PC-9 (cell line): ENCODE measurements at regions of chr12 and their contacts with region 1.

Region 1: DNA sequence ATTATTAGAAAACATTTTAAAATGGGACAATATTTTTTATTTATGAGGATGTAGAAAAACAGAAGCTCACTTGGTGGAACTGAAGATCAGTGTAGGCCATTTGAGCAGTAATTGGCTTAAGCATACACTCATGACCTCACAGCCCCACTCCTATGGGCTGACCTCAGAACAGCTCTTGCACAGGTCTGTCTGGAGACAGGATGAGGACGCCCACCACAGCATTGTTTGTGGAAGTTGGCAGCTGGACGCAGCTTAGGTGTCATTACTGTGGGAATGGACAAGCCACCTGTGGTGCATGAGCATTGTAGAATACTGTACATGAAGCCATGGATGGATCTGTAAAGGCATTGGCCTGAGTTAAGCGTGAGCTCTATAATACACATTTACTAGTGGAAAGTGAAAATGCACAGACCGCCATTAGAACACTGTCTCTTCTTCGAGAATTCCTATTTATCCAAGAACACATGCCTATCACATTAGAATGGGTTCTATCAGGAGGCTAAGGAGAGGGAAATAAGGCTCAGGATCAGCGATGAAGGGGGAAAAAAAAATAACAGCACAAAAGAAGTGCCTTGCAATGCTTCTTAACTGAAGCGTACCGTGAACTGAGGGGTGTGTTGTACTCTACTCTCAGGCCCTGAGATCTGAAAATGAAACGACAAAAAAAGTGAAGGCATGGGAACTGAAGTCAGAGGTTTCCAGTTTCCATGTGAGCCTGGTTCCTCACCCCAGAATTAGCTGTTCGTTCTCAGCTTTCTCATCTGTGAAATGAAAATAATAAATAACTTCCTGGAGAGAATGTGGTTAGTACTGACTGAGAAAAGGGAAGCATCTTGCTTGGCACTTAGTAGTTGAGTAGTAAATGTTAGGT is 33.6 kb downstream of the KCNA1 start:
- DNase-seq: no peak
- H3K4me3 ChIP-seq: no peak overlapping the region
- H3K27ac ChIP-seq: no peak overlapping the region
- H3K4me1 ChIP-seq: no peaks in the 10 kb centered on the region
- H3K27me3 ChIP-seq: peaks cover 90% of the 10 kb centered on the region
- CTCF ChIP-seq: no peak

Region 2: GRCh38 chr12:4908684-4909409 is 34.5 kb before region 1 on chr12:
- CTCF ChIA-PET with region 1: no interaction called
- POLR2A ChIA-PET with region 1: no interaction called
- intact Hi-C with region 1: no loop called
- DNase-seq: no peak
- H3K4me3 ChIP-seq: no peak overlapping the region
- H3K27ac ChIP-seq: no peak overlapping the region
- H3K4me1 ChIP-seq: no peaks in the 10 kb centered on the region
- H3K27me3 ChIP-seq: peaks cover 40% of the 10 kb centered on the region
- CTCF ChIP-seq: no peak

Region 3: DNA sequence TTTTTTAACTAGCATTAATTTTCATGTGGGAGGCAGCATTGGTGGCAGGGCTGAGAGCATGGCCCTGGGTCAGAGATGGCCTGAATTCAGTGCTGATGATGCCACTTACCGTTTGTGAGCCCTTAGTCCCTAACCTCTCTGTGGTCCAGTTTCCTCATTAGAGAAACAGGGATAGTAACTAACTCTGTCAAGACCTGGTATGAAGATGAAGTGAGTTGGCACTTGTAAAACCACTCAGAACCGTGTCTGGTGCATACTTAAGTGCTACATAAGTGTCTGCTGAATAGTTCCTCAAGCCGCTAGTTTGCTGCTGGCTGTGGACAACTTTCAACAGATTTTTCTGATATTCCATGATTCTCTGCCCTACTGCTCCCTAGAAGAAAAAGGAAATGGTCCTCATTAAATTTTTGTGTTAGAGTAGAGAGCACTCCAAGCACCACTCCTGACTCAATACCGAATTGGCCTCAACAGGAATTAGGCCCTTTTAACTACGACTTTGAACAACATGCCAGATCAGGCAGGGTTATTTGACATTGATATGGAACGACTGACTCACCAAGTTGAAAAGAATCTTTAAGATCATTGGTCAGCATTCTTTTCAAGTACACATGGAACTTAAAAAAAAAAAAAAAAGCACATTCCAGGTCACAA is 751.6 kb after region 1 on chr12:
- CTCF ChIA-PET with region 1: no interaction called
- POLR2A ChIA-PET with region 1: interaction called, 22 read pairs
- intact Hi-C with region 1: no loop called
- DNase-seq: no peak
- H3K4me3 ChIP-seq: no peak overlapping the region
- H3K27ac ChIP-seq: no peak overlapping the region
- H3K4me1 ChIP-seq: no peaks in the 10 kb centered on the region
- H3K27me3 ChIP-seq: peaks cover 66% of the 10 kb centered on the region
- CTCF ChIP-seq: no peak